AG04449 (cell line): ENCODE measurements at regions of chr6 and their contacts with region 1.

Region 1: GRCh38 chr6:139708337-139709199 is 334.1 kb upstream of the CITED2 start:
- DNase-seq: peak; percentile 56
- H3K4me3 ChIP-seq: no peak overlapping the region
- CTCF ChIP-seq: no peak

Region 2: DNA sequence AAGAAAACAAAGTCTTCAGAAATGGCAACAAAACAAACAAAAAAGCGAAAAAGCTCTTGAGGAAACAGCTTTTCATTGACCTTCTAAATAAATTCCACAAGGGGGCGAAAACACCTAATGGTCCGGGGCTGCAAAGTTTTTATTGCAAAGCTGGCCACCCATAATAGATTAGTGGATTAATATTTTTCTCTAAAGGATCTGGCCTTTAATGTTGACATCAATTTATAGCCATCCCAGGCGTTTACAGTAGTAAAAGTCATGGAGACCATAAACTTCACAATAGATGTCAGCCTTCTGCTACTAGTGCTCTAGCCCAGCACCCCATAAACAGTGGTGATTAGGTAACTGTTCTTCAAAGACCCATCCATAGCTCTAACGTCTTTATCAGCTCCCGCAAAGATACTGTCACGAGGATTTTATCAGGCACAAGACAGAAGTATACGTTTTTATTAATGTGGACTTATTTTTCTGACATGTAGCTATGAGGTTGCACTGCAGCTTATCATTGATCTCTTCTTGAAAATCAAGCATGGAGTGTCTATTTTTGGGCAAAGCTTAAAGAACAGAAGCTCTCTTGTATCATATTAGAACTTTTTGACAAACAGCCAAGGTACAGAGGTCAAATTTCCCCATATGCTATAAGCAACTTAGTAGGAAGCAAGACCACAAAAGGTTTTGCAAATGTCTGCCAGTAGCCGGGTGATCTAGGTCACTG is 338.8 kb before region 1 on chr6:
- CTCF ChIA-PET with region 1: no interaction called
- POLR2A ChIA-PET with region 1: interaction called, 26 read pairs
- DNase-seq: peak; percentile 66
- H3K4me3 ChIP-seq: no peak overlapping the region
- CTCF ChIP-seq: peak; percentile 31

Region 3: DNA sequence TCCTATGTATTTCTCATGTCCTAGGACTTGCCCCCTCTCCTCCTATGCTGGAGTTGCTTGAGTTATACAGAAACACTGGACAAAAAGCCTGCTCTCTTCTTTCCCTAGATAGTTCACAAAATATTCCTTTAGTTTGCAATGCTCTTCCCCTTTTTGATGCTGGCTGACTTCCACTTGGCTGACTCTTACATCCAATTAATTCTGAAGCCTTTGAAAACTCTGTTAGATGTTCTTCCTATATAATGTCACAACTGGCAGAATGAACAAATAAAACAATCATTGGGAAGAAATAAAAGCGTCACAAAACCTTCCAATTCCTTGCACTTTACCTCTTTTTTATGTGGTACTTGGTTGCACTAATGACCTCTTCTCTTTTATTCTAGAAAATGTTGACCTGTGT is 80.3 kb before region 1 on chr6:
- CTCF ChIA-PET with region 1: no interaction called
- POLR2A ChIA-PET with region 1: no interaction called
- DNase-seq: no peak
- H3K4me3 ChIP-seq: no peak overlapping the region
- CTCF ChIP-seq: no peak